Dorsolateral prefrontal cortex (tissue), 120 donors: ENCODE measurements at regions of chr14 and their contacts with region 1.

Region 1: DNA sequence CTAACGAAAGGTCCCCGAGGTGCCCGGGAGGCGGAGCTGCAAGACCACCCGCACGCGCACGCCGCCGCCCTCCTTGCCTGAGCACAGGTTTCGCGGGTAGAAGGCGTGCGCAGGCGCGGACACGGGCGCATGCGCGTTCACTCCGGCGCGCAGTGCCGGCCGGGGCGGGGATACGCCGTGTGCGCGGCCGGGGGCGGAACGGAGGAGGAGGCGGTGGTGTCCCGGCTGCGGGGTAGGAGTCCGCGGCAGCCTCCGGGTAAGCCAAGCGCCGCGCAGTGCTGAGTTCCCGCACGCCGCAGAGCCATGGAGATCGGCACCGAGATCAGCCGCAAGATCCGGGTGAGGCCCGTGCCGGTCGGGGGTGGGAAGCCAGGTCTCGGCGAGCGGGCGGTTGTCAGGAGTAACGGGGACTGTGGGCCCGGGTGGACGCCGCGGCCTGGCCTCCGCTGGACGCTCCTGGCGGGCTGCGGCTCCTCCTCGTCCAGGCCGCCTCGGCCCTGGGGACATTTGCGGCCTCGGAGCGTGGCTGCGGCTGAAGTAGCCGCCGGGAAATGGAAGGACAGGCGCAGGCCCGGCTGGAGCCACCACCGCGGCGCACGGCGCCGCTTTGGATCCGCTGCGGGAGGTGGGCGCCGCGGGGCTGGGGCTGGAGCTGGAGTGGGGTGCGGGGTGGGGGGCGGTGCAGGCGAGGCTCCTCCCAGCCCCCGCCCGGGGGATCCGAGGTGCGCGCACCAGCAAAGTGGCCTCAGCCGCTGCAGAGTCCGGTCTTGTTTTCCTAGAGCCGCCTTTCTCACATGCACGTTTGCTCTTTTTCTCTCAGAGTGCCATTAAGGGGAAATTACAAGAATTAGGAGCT is at the start of gene ZC3H14:
- DNase-seq: peak; percentile 64 to 93 (median 76)
- H3K4me3 ChIP-seq: peak within 1 kb of the TSS; percentile 71 to 99 (median 95)
- H3K27ac ChIP-seq: peak within 1 kb of the TSS; percentile 46 to 96 (median 89)
- H3K27me3 ChIP-seq: no peaks in the 10 kb centered on the region
- CTCF ChIP-seq: peak in 35 of 56 donors; percentile 4 to 55 (median 29)
- total RNA-seq, gene ZC3H14: 68.9 to 120 (median 86.6) TPM

Region 2: GRCh38 chr14:87992718-87993628 is 570.1 kb before region 1 on chr14 and contains the start of gene GALC:
- intact Hi-C with region 1: loop called (anchors 5 to 10 kb)
- DNase-seq: peak; percentile 94 to 96 (median 95)
- H3K4me3 ChIP-seq: peak within 1 kb of the TSS; percentile 61 to 92 (median 79)
- H3K27ac ChIP-seq: peak within 1 kb of the TSS; percentile 72 to 99 (median 97)
- H3K27me3 ChIP-seq: no peaks in the 10 kb centered on the region
- CTCF ChIP-seq: peak in 25 of 56 donors; percentile 7 to 44 (median 23)
- total RNA-seq, gene GALC: 23.9 to 65.1 (median 41.0) TPM

Region 3: DNA sequence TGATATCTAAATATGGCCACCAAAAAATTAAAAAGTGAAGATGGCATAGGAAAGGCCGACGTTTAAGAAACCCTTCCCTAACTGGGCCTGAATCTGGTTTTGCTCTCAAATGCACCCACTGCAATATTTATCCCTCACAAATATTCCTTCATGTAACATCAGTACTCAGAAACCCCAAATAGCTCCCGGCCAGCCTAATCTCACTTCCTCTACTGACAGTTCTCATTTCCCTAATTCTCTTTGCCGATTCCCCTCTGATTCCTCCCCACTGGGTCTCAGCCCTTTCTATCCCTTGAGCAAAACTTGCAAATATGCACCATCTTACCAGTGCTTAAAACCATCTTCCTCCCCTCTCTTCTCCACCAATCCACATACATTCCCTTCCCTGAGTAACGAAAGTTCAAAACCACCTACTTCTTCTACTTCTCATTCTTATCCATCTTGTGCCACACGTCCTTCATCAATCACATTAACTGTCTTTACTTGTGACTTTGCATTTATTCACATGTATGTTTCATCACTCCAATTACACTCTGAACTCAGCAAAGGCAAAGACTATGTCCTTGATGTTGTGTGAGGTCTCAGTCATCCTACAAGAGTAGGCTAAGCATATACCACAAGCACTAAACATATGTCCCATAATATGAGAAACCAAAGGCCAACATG is 263.1 kb before region 1 on chr14:
- intact Hi-C with region 1: no loop called
- DNase-seq: no peak
- H3K4me3 ChIP-seq: no peak overlapping the region
- H3K27ac ChIP-seq: peak overlapping the region in 3 of 59 donors; percentile 8 to 40 (median 14)
- H3K27me3 ChIP-seq: no peaks in the 10 kb centered on the region
- CTCF ChIP-seq: no peak

Region 4: GRCh38 chr14:88504602-88505001 is 58.5 kb before region 1 on chr14:
- intact Hi-C with region 1: no loop called
- DNase-seq: no peak
- H3K4me3 ChIP-seq: no peak overlapping the region
- H3K27ac ChIP-seq: no peak overlapping the region
- H3K27me3 ChIP-seq: no peaks in the 10 kb centered on the region
- CTCF ChIP-seq: no peak

Region 5: GRCh38 chr14:88515499-88516221 is 47.4 kb before region 1 on chr14:
- intact Hi-C with region 1: no loop called
- DNase-seq: no peak
- H3K4me3 ChIP-seq: no peak overlapping the region
- H3K27ac ChIP-seq: no peak overlapping the region
- H3K27me3 ChIP-seq: no peaks in the 10 kb centered on the region
- CTCF ChIP-seq: no peak

Region 6: DNA sequence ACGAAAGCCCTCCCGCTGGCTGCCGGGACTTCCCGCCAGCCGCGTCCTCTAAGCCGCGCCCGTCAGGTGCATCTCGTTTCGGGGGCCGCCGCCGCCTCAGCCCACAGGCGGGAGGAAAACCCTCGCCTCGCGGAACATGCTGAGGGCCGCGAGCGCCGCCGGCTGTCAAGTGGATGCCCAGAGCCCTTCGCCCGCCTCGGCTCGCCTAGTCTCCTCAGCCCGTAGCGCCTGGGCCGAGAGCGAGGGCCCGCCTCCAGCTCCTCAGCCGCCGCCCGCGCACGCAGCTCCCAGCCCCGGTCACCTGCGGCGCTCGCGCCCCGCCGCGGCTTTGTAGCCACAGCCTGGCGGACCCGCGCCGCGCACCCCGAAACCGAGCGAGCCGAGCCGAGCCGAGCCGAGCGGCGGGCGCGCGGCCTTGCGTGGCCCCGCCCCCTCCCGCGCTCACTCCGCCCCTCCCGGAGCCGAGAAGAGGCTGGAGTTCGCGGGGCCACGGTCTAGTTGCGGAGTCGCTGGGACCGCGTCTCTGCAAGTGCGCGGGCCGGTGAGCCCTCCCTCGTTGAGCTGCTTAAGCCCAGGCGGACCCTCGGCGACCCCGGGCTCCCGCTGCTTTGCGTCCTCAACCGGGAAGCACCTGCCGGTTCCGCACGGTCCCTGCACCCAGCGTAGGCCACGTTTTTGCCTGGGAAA is 229.7 kb after region 1 on chr14 and contains the start of gene EML5:
- intact Hi-C with region 1: loop called in 1 of 2 experiments (anchors 10 kb)
- DNase-seq: peak; percentile 63 to 91 (median 82)
- H3K4me3 ChIP-seq: peak within 1 kb of the TSS; percentile 52 to 92 (median 82)
- H3K27ac ChIP-seq: peak within 1 kb of the TSS in 58 of 59 donors; percentile 37 to 94 (median 84)
- H3K27me3 ChIP-seq: no peaks in the 10 kb centered on the region
- CTCF ChIP-seq: peak in 36 of 56 donors; percentile 2 to 62 (median 32)
- total RNA-seq, gene EML5: 7.7 to 23.3 (median 14.2) TPM